MCF 10A (cell line): ENCODE measurements at regions of chr2 and their contacts with region 1.

Region 1: DNA sequence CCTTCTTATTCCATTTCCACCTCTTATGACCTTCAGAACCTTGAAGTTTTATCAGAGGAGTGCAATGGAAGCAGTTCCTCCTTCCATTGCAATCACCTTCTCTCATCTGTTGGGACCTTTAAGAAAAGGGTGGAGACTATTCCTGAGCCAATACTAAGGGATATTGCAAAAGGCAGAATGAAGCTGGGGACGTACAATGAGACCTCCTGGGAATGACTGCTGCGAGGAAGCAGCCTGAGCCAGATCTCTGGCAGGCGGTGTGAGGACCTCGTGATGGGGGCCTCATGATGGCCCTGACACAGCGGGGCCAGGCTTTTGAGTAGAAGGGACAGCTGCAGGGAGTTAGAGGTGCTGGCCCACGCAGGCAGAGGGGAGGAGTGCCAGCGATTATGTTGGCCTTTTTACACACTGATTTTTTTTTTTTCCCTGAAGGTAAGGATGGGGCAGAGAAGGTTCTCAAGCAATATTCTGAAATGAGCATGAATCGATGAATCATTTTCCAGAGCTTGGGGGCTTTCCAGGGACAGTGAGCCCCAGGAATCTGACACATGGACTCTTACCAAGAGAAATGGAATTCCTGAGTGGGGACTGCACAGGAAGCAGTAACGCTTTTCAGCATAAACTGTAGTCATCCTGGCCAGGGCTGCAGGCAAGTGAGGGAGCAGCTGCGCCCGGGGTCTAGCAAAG is 40.0 kb upstream of the LAPTM4A start:
- DNase-seq: peak; percentile 71
- H3K4me3 Mint-ChIP-seq: peak overlapping the region; percentile 61
- H3K27ac Mint-ChIP-seq: peak overlapping the region; percentile 49
- H3K4me1 Mint-ChIP-seq: peaks cover 41% of the 10 kb centered on the region
- H3K27me3 Mint-ChIP-seq: no peaks in the 10 kb centered on the region
- CTCF ChIP-seq: no peak

Region 2: DNA sequence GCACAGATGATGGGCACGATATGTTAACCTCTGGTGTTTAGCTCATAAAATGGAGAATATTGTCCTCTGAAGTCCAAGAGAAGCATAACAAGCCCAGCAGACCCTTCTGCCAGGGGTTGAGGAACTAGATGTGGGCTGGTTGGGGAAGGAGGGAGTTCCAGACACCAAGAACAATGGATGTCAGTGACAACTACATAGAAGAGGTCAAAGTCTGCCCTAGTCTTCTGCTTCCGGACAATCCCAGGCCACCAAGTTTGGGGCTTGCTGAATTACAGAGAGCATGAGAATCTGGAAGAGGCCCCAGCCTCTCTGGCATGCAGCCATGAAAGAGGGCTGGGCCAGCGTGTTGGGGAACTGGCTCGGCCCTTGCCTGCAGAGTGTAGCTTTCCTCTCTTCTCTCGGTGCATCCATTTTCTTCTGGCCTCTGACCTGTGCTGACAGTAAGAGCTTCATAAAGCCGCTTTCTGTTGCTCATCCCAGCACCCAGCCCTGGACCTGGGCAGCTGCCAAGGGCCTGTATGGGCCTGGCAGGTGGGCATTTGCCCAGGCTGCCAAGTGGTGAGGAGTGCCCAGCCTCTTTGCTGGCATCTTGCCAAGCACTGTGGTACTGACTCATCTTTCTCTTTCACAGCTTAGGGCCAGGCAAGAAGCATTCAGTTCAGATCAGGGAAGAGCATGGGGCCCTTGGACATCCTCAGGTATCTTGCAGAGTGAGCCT is 25.4 kb before region 1 on chr2:
- CTCF ChIA-PET with region 1: interaction called, 11 read pairs
- POLR2A ChIA-PET with region 1: interaction called, 9 read pairs
- intact Hi-C with region 1: loop called (anchors 2 kb)
- DNase-seq: peak; percentile 99
- H3K4me3 Mint-ChIP-seq: peak overlapping the region; percentile 11
- H3K27ac Mint-ChIP-seq: peak overlapping the region; percentile 74
- H3K4me1 Mint-ChIP-seq: peaks cover 25% of the 10 kb centered on the region
- H3K27me3 Mint-ChIP-seq: no peaks in the 10 kb centered on the region
- CTCF ChIP-seq: no peak